Cardiac septum (tissue), 1 donor: ENCODE measurements at regions of chr9 and their contacts with region 1.

Region 1: DNA sequence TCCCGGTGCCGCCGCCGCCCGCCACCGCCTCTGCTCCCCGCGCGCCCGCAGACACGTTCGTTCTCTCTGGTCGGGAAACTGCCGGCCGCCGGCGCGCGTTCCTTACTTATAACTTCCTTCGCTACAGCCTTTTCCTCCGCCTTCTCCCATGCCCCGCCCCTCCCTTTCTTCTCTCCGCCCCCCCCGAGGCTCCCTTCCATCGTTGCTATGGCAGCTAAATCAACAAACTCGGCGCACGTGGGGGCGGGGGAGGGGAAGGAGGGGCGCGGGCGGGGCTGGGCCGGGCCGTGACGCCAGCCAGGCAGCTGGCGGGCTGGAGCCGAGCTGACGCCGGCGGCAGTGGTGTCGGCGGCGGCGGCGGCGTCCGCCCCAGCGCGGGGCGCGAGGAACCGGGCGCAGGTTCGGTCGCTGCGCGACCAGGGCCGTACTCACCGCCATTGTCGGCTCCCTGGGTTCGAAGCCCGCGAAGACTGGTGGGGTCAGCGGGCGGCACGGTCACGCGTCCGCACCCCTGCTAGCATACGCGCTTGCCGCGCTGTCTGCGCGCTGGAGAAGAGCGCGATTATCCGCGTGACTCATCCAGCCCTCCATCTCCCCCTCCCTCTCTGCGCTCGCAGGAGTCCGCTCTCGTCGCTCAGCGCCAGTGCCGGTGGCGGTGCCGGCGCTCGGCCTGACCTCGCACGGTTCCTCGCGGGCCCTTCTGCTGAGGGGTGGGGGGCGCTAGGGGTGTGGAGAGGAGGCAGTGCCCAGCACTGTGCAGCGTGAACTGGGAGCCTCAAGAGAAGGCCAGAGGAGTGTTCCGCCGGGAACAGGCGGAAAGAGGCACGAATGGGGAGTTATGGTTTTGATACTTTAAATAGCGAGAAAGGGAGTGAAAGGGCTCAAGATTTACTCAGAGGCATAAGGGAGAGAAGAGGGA is at the start of gene KLF4:
- DNase-seq: peak; percentile 95
- total RNA-seq, gene KLF4: 19.8 TPM

Region 2: DNA sequence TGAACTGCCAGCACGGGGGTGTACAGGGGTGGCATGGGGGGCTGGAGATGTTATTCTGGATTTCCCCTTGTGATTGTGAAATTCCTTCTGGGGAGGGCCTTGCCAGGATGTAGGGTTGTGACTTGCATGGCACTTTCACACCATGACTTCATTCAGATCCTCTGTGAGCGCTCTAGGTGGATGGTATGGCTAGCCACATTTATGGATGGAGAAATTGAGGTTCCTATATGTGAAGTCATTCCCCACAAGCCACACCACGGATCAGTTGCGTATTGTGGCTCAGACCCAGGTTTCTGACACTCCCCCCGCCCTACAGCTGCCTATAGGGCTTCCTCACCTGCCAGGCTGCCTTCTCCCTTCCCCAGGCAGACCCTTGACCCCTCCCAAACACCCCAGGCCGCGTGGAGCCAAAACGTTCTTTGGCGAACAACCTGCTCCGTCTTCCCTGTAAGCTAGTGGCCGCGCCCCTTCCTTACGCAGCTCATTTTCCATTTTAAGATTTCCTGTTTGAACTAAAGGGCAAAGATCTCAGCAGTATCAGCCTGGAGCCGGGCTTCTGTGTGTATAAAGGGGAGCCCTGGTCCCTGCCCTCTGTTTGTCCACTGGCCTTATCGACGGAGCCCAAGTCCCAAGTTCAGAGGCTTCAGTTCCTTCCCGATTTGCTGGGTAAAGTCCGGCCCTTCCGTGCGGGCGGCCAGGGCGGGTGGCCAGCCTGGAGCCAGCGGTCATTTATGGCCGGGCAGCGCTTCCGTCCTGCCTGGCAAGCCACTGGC is 97.4 kb after region 1 on chr9:
- intact Hi-C with region 1: loop called (anchors 5 kb)
- DNase-seq: peak; percentile 85

Region 3: GRCh38 chr9:107637421-107638420 is 147.8 kb after region 1 on chr9:
- intact Hi-C with region 1: loop called (anchors 1 kb)
- DNase-seq: peak; percentile 94

Region 4: GRCh38 chr9:108053555-108054061 is 563.7 kb after region 1 on chr9:
- intact Hi-C with region 1: loop called (anchors 5 kb)
- DNase-seq: no peak

Region 5: DNA sequence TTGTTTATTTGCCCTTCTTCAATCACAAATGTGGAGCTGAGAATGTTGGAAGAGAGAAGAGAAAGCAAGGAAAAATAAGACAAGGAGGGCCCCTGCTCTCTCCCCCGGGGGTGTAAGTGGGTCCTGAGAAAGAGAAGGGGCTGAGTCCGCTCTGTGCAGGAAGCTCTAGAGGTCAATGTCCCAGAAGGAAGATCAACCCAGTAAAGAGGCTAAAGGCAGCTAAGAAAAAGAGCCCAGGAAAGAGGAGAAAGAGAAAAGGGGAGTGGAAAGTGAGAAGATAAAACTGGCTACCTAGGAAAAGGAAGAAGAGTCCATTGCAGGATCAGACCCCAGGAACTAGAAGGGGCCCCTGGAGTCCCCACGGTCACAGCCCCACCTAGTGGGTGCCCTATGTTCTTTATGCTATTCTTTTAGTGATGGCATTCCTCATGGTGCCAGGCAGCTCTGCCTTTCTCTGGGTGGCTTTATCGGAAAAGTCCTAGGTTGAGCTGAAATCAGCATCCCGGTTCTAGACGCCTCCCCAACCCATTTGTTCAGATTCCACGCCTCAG is 782.5 kb after region 1 on chr9:
- intact Hi-C with region 1: loop called (anchors 5 kb)
- DNase-seq: no peak